ENCODE measurements at regions of chr14 and their contacts with region 1.

Region 1: GRCh38 chr14:99271951-99272631 is at the start of gene BCL11B:
- DNase-seq: peak; percentile 88
- H3K4me3 ChIP-seq: peak within 1 kb of the TSS; percentile 56 to 87 (median 77)
- H3K27ac ChIP-seq: peak within 1 kb of the TSS; percentile 56
- H3K4me1 ChIP-seq: peaks cover 20% of the 10 kb centered on the region
- H3K27me3 ChIP-seq: no peaks in the 10 kb centered on the region
- CTCF ChIP-seq: peak; percentile 44 to 58
- total RNA-seq, gene BCL11B: 7.1 to 8.3 TPM

Region 2: DNA sequence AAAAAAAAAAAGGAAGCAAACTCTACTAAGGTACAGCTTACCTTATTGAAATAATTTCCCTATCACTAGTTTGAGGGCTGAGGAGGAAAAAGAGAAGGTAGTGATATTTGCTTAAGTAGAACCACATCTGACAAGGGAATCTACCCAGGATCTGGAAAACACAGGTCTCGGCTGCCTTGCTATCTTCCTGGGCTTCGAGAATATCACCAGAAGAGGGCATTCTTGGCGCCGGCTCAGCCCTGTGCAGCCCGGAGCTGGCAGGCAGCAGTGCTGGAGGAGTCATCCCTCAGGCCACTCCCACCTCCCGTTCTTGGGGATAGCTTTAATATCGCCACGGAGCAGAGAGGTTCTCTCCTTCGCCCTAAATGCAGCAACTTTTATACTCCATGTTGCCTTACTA is 1293.8 kb before region 1 on chr14:
- CTCF ChIA-PET with region 1: no interaction called
- dilution Hi-C with region 1: no loop called
- in situ Hi-C with region 1: loop called in 1 of 2 experiments (anchors 25 kb)
- intact Hi-C with region 1: loop called (anchors 1 kb)
- DNase-seq: peak; percentile 70
- H3K4me3 ChIP-seq: no peak overlapping the region
- H3K27ac ChIP-seq: no peak overlapping the region
- H3K4me1 ChIP-seq: peaks cover 8% of the 10 kb centered on the region
- H3K27me3 ChIP-seq: no peaks in the 10 kb centered on the region
- CTCF ChIP-seq: peak; percentile 39 to 67

Region 3: GRCh38 chr14:98138666-98139065 is 1133.4 kb before region 1 on chr14:
- CTCF ChIA-PET with region 1: no interaction called
- dilution Hi-C with region 1: no loop called
- in situ Hi-C with region 1: loop called (anchors 25 kb)
- intact Hi-C with region 1: no loop called
- DNase-seq: peak; percentile 25
- H3K4me3 ChIP-seq: no peak overlapping the region
- H3K27ac ChIP-seq: no peak overlapping the region
- H3K4me1 ChIP-seq: peaks cover 4% of the 10 kb centered on the region
- H3K27me3 ChIP-seq: no peaks in the 10 kb centered on the region
- CTCF ChIP-seq: peak; percentile 49 to 82

Region 4: GRCh38 chr14:98494582-98494981 is 777.5 kb before region 1 on chr14:
- CTCF ChIA-PET with region 1: no interaction called
- dilution Hi-C with region 1: no loop called
- in situ Hi-C with region 1: no loop called
- intact Hi-C with region 1: loop called (anchors 5 kb)
- DNase-seq: peak; percentile 94
- H3K4me3 ChIP-seq: no peak overlapping the region
- H3K27ac ChIP-seq: peak overlapping the region; percentile 87
- H3K4me1 ChIP-seq: peaks cover 39% of the 10 kb centered on the region
- H3K27me3 ChIP-seq: no peaks in the 10 kb centered on the region
- CTCF ChIP-seq: peak in 1 of 2 donors; percentile 23

Region 5: GRCh38 chr14:98906123-98906995 is 365.7 kb before region 1 on chr14:
- CTCF ChIA-PET with region 1: no interaction called
- dilution Hi-C with region 1: no loop called
- in situ Hi-C with region 1: no loop called
- intact Hi-C with region 1: loop called (anchors 5 kb)
- DNase-seq: peak; percentile 93
- H3K4me3 ChIP-seq: no peak overlapping the region
- H3K27ac ChIP-seq: peak overlapping the region; percentile 68
- H3K4me1 ChIP-seq: peaks cover 72% of the 10 kb centered on the region
- H3K27me3 ChIP-seq: no peaks in the 10 kb centered on the region
- CTCF ChIP-seq: no peak

Region 6: GRCh38 chr14:99230208-99231151 is 41.6 kb before region 1 on chr14:
- CTCF ChIA-PET with region 1: interaction called, 20 read pairs
- dilution Hi-C with region 1: no loop called
- in situ Hi-C with region 1: no loop called
- intact Hi-C with region 1: no loop called
- DNase-seq: no peak
- H3K4me3 ChIP-seq: no peak overlapping the region
- H3K27ac ChIP-seq: no peak overlapping the region
- H3K4me1 ChIP-seq: peaks cover 4% of the 10 kb centered on the region
- H3K27me3 ChIP-seq: no peaks in the 10 kb centered on the region
- CTCF ChIP-seq: peak in 1 of 2 donors; percentile 31

Region 7: DNA sequence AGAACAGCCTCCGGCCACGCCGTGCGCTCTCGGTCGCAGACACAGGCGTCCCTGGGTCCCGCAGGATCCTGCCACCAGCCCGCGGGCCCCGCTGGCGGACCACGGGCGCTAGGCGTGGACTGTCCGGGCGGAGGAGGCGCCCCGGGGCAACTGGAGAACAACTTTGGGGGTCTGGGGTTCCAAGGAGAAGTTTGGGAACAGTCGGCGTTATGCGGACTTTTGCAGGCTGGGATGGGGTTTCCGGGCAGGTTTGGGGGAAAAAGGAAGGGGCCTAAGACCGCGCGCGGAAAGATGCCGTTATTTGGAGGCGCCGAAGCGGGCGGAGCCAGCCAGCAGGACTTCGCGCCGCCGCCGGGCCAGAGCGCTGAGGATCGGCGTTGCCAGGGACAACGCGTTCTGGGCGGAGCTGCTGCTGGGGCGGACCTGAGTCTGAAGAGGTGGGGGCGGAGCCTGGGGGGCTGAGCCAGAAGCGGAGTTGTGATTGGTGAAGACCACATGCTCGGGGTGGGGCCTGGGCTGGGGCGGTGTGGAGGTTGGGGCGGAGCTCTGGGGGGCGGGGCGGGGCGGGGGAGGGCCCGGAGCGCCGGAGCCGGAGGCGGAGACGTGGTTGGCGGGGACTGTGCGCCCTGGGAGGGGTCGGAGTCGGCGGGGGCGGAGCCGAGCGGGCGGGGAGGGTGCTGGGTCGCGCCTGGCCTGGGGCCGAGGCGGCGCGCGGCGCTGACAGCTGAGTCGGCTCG is 411.7 kb after region 1 on chr14 and contains the start of gene CYP46A1:
- CTCF ChIA-PET with region 1: no interaction called
- dilution Hi-C with region 1: no loop called
- in situ Hi-C with region 1: no loop called
- intact Hi-C with region 1: loop called (anchors 5 kb)
- DNase-seq: peak; percentile 97
- H3K4me3 ChIP-seq: peak within 1 kb of the TSS; percentile 65 to 86 (median 67)
- H3K27ac ChIP-seq: peak within 1 kb of the TSS; percentile 57
- H3K4me1 ChIP-seq: peaks cover 19% of the 10 kb centered on the region
- H3K27me3 ChIP-seq: peaks cover 3% of the 10 kb centered on the region
- CTCF ChIP-seq: no peak
- total RNA-seq, gene CYP46A1: not detected

Measured in mammary epithelial cell (primary cell).